Left cardiac atrium (tissue), 4 donors: ENCODE measurements at regions of chr6 and their contacts with region 1.

Region 1: DNA sequence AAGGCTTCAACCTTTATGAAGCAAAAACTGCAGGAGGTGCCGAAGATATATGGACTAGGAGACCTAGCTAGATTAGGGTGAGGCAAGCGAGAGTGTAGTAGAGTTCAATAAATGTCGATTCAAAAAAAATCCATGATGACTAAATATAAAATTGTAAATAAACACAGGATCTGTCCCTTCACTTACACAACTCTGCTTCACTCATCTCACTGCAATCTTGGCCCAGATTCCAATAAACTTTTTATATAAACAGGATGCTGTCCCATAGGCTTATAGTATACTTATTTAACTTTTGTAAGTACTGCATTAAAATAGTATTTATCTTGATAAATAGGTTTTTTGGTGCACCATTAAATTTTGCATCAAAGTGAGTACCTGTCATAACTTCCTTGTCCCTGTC is 648.4 kb upstream of the NRSN1 start:
- DNase-seq: no peak
- ATAC-seq: no peak

Region 2: DNA sequence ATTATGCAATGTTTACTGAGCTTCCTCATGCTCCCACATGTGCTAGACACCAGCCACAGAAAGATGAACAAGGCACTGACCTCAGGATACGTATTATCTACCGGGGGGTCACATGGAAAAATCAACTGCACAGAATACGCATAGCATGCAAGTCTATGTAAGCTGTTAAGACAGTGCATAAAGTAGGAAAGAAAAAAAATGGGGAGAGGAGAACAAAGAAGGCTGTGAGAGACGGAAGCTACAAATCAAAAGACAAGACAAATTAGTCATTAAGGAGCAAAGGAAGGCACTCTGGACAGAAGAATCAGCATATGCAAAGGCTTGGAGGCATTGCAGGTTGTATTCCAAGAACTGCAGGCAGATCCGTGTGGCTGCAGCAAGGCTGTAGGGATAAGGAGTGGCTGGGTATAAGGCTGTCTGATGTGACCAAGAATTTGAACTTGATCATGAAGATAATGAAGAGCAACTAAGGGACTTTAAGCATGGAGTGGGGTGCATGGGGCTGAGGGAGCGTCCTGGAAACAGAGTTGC is 737.4 kb after region 1 on chr6:
- intact Hi-C with region 1: loop called in 1 of 2 experiments (anchors 10 kb)
- DNase-seq: no peak
- ATAC-seq: no peak